Mammary epithelial cell (primary cell): ENCODE measurements at regions of chr3 and their contacts with region 1.

Region 1: GRCh38 chr3:57411715-57412114 is 119.2 kb upstream of the ASB14 start:
- DNase-seq: no peak
- H3K4me3 ChIP-seq: no peak overlapping the region
- H3K27ac ChIP-seq: no peak overlapping the region
- H3K4me1 ChIP-seq: no peaks in the 10 kb centered on the region
- H3K27me3 ChIP-seq: no peaks in the 10 kb centered on the region
- CTCF ChIP-seq: no peak

Region 2: GRCh38 chr3:57512166-57512565 is 100.5 kb after region 1 on chr3:
- CTCF ChIA-PET with region 1: no interaction called
- dilution Hi-C with region 1: loop called (anchors 5 kb)
- in situ Hi-C with region 1: no loop called
- intact Hi-C with region 1: no loop called
- DNase-seq: no peak
- H3K4me3 ChIP-seq: no peak overlapping the region
- H3K27ac ChIP-seq: no peak overlapping the region
- H3K4me1 ChIP-seq: no peaks in the 10 kb centered on the region
- H3K27me3 ChIP-seq: peaks cover 3% of the 10 kb centered on the region
- CTCF ChIP-seq: no peak